ENCODE measurements at regions of chr22 and their contacts with region 1.

Region 1: DNA sequence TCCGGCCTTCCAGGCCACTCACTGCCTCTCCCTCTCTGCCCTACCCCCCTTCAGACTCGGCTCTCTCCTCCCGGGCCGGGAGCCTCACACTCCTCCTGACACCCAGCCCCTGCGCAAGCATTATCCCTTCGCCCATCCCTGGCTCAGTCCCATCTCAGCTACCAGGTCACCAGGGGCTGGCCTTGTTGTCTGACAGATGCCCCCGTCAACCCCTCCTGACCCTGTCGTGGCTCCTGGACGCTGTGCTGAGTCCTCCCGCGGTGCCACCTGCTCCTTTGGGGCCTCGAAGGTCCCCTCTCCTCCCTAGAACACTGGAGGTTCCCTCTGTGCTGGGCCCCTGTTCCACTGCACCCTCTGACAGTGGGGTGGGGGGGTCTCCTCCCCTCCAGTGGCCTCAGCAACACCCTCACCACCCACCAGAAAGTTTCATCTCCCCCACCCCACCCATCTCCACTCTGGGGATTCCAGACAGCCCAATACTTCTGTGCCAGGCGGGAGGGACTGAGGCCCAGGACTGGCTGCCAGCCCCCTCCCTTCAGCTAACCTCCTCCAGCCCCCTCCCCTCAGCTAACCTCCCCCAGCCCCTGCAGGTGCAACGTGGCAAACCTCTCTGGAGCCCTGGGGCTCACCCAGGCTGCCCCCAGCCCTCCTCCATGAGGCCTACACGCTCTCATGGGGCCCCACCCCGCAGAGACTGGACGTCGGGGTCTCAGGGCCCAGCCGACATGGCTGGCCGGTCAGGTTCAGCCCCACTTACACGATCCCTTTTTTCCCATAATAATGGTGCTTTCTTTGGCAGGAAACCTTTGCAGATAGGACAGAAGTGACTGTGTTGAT is 33.1 kb downstream of the TRMU start:
- DNase-seq: no peak
- H3K4me3 ChIP-seq: no peak overlapping the region
- H3K27ac ChIP-seq: no peak overlapping the region
- H3K4me1 ChIP-seq: peaks cover under 1% of the 10 kb centered on the region; the same call in 1 of the 2 replicates
- H3K27me3 ChIP-seq: no peaks in the 10 kb centered on the region
- CTCF ChIP-seq: no peak

Region 2: DNA sequence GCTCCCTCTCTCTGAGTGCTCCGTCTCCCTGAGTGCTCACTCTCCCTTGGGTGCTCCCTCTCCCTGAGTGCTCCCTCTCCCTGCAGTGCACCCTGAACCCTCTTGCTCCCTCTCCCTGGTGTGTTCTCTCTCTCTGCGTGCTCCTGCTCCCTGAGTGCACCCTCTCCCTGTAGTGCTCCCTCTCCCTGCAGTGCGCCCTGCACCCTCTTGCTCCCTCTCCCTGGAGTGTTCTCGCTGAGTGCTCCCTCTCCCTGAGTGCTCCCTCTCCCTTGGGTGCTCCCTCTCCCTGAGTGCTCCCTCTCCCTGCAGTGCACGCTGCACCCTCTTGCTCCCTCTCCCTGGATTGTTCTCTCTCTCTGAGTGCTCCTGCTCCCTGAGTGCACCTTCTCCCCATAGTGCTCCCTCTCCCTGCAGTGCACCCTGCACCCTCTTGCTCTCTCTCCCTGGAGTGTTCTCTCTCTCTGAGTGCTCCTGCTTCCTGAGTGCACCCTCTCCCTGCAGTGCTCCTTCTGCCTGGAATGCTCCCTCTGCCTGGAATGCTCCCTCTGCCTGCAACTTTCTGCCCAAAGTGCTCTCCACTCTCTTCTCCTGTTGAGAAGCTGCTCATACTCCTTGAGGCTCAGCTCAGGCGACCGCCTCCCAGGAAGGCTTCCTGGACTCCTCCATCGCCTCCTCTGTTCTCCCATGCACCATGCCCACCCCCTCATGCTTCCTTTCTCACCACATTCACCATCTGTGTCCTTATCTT is 343.2 kb before region 1 on chr22:
- CTCF ChIA-PET with region 1: interaction called, 22 read pairs
- POLR2A ChIA-PET with region 1: no interaction called
- intact Hi-C with region 1: no loop called
- DNase-seq: no peak
- H3K4me3 ChIP-seq: no peak overlapping the region
- H3K27ac ChIP-seq: no peak overlapping the region
- H3K4me1 ChIP-seq: 0 out of 2 replicates have a peak, but pooled peaks cover 7% of the 10 kb centered on the region
- H3K27me3 ChIP-seq: peaks cover 22% of the 10 kb centered on the region
- CTCF ChIP-seq: no peak

Region 3: DNA sequence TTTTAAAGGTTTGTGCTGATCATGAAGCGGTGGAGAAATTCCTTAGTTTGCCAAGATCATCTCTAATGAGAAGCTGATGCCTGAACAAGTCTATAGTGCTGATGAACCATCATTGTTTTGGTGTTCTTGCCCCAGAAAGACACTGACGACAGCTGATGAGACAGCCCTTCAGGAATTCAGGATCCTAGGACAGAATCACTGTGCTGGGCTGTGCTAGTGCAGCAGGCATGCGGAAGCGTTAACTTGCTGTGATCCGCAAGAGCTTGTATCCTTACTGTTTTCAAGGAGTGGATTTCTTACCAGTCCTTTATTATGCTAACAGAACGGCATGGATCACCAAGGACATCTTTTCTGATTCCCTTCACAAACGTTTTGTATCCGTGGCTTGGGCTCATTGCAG is 498.0 kb after region 1 on chr22:
- CTCF ChIA-PET with region 1: no interaction called
- POLR2A ChIA-PET with region 1: no interaction called
- intact Hi-C with region 1: no loop called
- DNase-seq: peak in 1 of 2 experiments; percentile 20
- H3K4me3 ChIP-seq: no peak overlapping the region
- H3K27ac ChIP-seq: no peak overlapping the region
- H3K4me1 ChIP-seq: no peaks in the 10 kb centered on the region
- H3K27me3 ChIP-seq: no peaks in the 10 kb centered on the region
- CTCF ChIP-seq: no peak